Tibial artery (tissue), 4 donors: ENCODE measurements at regions of chr9 and their contacts with region 1.

Region 1: GRCh38 chr9:70352802-70353201 is 61.7 kb downstream of the KLF9 start:
- DNase-seq: no peak
- H3K4me3 ChIP-seq: no peak overlapping the region
- H3K27ac ChIP-seq: peak overlapping the region in 1 of 2 donors; percentile 4
- H3K4me1 ChIP-seq: peaks cover 0 to 21% (median 0%) of the 10 kb centered on the region in 4 donors
- H3K27me3 ChIP-seq: no peaks in the 10 kb centered on the region
- CTCF ChIP-seq: peak; percentile 67 to 69

Region 2: DNA sequence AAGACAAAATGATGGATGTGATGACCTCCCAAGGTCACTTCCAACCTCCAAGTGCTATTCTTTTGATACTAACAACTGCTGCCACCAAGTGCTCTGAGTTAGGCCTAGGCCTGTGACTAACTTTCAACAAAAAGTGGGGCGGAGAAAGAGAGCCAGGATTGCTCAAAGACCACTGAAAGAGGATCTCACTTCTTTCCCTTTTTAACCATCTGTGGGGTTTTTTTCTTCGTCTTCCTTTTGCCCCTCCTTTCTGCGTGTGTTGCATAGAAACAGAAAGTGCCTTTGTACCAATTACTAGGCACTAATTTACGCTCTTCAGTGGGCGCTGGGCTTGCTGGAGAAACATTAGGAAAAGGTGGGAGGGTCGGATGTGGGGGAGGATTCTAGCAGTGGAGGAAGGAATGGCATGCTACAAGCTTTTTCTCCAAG is 53.6 kb after region 1 on chr9:
- intact Hi-C with region 1: loop called (anchors 10 kb)
- DNase-seq: no peak
- H3K4me3 ChIP-seq: peak overlapping the region; percentile 34
- H3K27ac ChIP-seq: peak overlapping the region; percentile 69
- H3K4me1 ChIP-seq: peaks cover 0 to 85% (median 74%) of the 10 kb centered on the region in 4 donors
- H3K27me3 ChIP-seq: no peaks in the 10 kb centered on the region
- CTCF ChIP-seq: no peak

Region 3: GRCh38 chr9:70494221-70494620 is 141.4 kb after region 1 on chr9:
- intact Hi-C with region 1: loop called (anchors 10 kb)
- DNase-seq: no peak
- H3K4me3 ChIP-seq: no peak overlapping the region
- H3K27ac ChIP-seq: peak overlapping the region; percentile 33 to 36
- H3K4me1 ChIP-seq: peaks cover 0 to 34% (median 16%) of the 10 kb centered on the region in 4 donors
- H3K27me3 ChIP-seq: no peaks in the 10 kb centered on the region
- CTCF ChIP-seq: no peak